Activated CD8-positive, alpha-beta T cell treated with anti-CD3 and anti-CD28 coated beads, Interleukin-2, amount 10 ng/mL, durations not matched to agents 7 days and 5 days (primary cell): ENCODE measurements at regions of chr11 and their contacts with region 1.

Region 1: DNA sequence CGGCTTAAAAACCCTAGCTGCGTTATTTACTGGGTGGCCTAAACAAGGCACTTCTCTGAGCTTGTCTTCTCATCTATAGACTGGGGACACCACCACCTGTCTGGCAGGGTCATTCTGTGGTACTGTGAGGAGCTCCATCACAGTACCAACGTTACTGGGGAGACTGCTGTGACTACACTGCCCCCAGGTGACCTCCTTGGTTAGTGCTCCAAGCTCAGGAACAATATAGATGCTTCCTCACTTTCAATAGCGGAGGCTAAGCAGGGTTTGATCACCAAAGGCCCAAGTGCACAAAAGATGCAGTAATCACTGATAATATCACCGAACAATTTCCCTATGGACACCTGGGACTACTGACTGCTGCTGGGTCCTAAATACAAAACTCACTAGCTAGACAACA is 18.8 kb downstream of the PRPF19 start:
- DNase-seq: peak; percentile 79
- ATAC-seq: peak; percentile 99
- H3K4me3 Mint-ChIP-seq: no peak overlapping the region
- H3K27ac Mint-ChIP-seq: no peak overlapping the region
- H3K4me1 Mint-ChIP-seq: peaks cover 9% of the 10 kb centered on the region
- H3K27me3 Mint-ChIP-seq: no peaks in the 10 kb centered on the region

Region 2: DNA sequence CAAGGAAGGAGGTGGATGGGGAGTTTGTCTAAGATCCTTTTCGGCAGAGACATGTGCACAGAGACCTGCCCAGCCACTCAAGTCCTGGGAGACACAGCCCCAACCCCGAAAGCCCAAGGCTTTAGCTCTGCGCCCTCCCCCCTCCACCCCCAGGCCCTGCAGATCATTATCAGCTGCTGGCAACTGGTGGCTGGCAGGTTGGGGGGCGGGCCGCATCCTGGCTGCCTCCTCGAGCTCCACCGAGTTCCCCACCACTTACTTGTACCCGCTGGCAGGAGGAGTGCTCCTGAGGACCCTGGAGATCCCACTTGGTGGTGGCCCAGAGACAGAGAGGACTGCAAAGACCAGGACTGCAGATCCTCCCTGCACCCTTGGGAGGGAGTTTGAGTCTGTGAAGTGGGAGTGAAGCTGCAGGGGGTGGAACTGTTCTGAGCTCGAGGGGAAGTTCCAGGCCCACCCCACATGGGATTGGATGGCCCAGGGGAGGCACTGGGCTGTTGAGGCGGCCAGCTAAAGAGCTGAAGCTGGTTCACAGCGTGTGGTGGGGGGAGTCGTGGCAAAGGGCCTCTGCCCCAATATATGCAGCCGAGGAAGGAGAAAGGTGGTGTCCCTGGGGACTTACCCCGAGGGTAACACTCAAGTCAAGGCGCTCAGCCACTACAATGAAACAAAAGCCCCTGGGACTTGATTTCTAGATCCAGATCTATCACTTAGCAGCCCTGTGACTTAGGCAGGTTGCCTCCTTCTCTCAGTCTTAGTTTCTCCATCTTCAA is 65.5 kb before region 1 on chr11:
- CTCF ChIA-PET with region 1: interaction called, 610 read pairs
- POLR2A ChIA-PET with region 1: no interaction called
- DNase-seq: no peak
- ATAC-seq: peak; percentile 15
- H3K4me3 Mint-ChIP-seq: no peak overlapping the region
- H3K27ac Mint-ChIP-seq: no peak overlapping the region
- H3K4me1 Mint-ChIP-seq: no peaks in the 10 kb centered on the region
- H3K27me3 Mint-ChIP-seq: peaks cover 6% of the 10 kb centered on the region

Region 3: GRCh38 chr11:60855726-60856633 is 31.6 kb before region 1 on chr11 and contains the start of gene PTGDR2:
- CTCF ChIA-PET with region 1: interaction called, 18 read pairs
- POLR2A ChIA-PET with region 1: no interaction called
- DNase-seq: peak; percentile 51
- ATAC-seq: peak; percentile 46
- H3K4me3 Mint-ChIP-seq: peak within 1 kb of the TSS; percentile 63
- H3K27ac Mint-ChIP-seq: peak within 1 kb of the TSS; percentile 83
- H3K4me1 Mint-ChIP-seq: peaks cover 63% of the 10 kb centered on the region
- H3K27me3 Mint-ChIP-seq: no peaks in the 10 kb centered on the region
- total RNA-seq, gene PTGDR2: 3.3 to 3.4 TPM

Region 4: GRCh38 chr11:60872961-60873524 is 14.5 kb before region 1 on chr11:
- CTCF ChIA-PET with region 1: interaction called, 122 read pairs
- POLR2A ChIA-PET with region 1: no interaction called
- DNase-seq: no peak
- ATAC-seq: no peak
- H3K4me3 Mint-ChIP-seq: no peak overlapping the region
- H3K27ac Mint-ChIP-seq: peak overlapping the region; percentile 87
- H3K4me1 Mint-ChIP-seq: peaks cover 68% of the 10 kb centered on the region
- H3K27me3 Mint-ChIP-seq: no peaks in the 10 kb centered on the region

Region 5: GRCh38 chr11:60906132-60906972 is 18.8 kb after region 1 on chr11 and contains the start of gene PRPF19:
- CTCF ChIA-PET with region 1: interaction called, 35 read pairs
- POLR2A ChIA-PET with region 1: interaction called, 5 read pairs
- DNase-seq: peak; percentile 99
- ATAC-seq: peak; percentile 93
- H3K4me3 Mint-ChIP-seq: peak within 1 kb of the TSS; percentile 80
- H3K27ac Mint-ChIP-seq: peak within 1 kb of the TSS; percentile 89
- H3K4me1 Mint-ChIP-seq: peaks cover 48% of the 10 kb centered on the region
- H3K27me3 Mint-ChIP-seq: peaks cover 7% of the 10 kb centered on the region
- total RNA-seq, gene PRPF19: 161 TPM